ENCODE measurements at regions of chr12 and their contacts with region 1.

Region 1: DNA sequence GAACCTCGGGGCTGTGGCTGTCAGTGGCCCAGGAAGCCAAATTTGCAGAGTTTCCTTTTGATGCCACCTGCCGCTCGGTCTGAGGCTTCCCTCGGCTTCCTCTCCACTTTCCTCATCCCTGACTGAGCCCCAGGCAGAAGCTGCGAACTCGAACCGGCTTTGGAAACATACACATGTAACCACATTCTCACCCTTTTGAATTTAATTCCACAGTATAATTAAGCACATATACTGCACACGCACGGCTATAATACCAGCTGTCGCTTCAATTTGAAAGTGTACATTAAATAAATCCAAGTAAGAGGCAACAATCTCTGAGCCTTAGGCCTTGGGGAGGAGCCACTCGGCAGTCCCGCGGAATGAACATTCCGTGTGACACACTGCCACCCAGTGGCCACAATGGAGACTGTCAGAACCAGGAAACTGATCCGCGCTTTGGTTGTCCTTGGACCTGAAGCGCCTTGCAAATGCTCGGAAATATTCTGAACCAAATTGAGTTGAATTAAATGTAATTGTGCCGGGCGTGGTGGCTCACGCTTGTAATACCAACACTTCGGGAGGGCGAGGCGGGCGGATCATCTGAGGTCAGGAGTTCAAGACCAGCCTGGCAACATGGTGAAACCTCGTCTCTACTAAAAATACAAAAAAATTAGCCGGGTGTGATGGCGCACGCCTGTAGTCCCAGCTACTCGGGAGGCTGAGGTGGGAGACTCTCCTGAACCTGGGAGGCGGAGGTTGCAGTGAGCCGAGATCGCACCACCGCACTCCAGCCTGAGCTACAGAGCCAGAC is 117.9 kb upstream of the TMPO start:
- ATAC-seq: peak; percentile 90 to 95 (median 93)
- H3K4me3 ChIP-seq: peak overlapping the region; percentile 8 to 37 (median 23)
- H3K27ac ChIP-seq: no peak overlapping the region
- H3K4me1 ChIP-seq: peaks cover 11 to 14% of the 10 kb centered on the region in 2 donors

Region 2: DNA sequence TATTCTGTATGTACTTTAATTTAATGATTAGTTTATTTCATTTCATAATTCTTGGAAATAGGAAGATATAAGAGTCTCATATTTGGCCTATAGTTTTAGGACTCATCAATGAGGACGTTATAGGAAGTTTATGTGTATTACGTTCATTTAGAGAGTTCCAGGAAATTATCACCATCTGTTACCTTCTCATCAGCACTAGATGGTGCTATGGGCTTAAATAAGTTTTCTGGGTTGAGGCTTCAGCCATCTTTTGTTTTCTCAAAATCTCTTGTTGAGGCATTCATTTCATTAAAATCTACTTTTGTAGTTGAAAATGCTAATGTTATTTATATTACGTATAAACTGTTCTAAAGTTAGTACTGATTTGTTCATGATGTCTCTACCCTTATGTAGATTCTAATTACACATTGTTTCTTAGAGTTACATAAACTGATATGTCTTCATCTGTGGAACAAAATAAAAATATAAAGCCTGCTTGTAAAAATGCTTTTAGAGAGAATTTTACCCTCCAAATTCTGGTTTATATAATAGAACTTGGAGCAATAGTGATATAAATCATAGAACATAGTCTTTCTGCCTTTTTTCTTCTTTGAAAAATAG is 1818.9 kb before region 1 on chr12:
- in situ Hi-C with region 1: loop called in 6 of 9 experiments (anchors 10 to 25 kb)
- ATAC-seq: peak in 6 of 8 experiments; percentile 41 to 85 (median 62)
- H3K4me3 ChIP-seq: no peak overlapping the region
- H3K27ac ChIP-seq: no peak overlapping the region
- H3K4me1 ChIP-seq: peaks cover 5 to 10% of the 10 kb centered on the region in 2 donors

Region 3: GRCh38 chr12:97308576-97309198 is 1088.8 kb before region 1 on chr12:
- in situ Hi-C with region 1: loop called in 2 of 9 experiments (anchors 25 kb)
- ATAC-seq: no peak
- H3K4me3 ChIP-seq: no peak overlapping the region
- H3K27ac ChIP-seq: no peak overlapping the region
- H3K4me1 ChIP-seq: peaks cover 24 to 27% of the 10 kb centered on the region in 2 donors

Region 4: GRCh38 chr12:97960754-97961608 is 436.5 kb before region 1 on chr12:
- in situ Hi-C with region 1: loop called in 1 of 9 experiments (anchors 25 kb)
- ATAC-seq: peak in 4 of 8 experiments; percentile 31 to 83 (median 44)
- H3K4me3 ChIP-seq: no peak overlapping the region
- H3K27ac ChIP-seq: no peak overlapping the region
- H3K4me1 ChIP-seq: no peaks in the 10 kb centered on the region

Measured in motor neuron (in vitro differentiated cells).